ENCODE measurements at regions of chr19 and their contacts with region 1.

Region 1: GRCh38 chr19:17470068-17470841 is at the start of gene SLC27A1:
- DNase-seq: peak; percentile 100
- ATAC-seq: peak; percentile 96
- H3K4me3 ChIP-seq: peak within 1 kb of the TSS; percentile 56 to 62
- H3K27ac ChIP-seq: peak within 1 kb of the TSS in 1 of 2 donors; percentile 73
- H3K4me1 ChIP-seq: no peaks in the 10 kb centered on the region
- H3K27me3 ChIP-seq: no peaks in the 10 kb centered on the region
- total RNA-seq, gene SLC27A1: 12.0 to 22.2 TPM

Region 2: DNA sequence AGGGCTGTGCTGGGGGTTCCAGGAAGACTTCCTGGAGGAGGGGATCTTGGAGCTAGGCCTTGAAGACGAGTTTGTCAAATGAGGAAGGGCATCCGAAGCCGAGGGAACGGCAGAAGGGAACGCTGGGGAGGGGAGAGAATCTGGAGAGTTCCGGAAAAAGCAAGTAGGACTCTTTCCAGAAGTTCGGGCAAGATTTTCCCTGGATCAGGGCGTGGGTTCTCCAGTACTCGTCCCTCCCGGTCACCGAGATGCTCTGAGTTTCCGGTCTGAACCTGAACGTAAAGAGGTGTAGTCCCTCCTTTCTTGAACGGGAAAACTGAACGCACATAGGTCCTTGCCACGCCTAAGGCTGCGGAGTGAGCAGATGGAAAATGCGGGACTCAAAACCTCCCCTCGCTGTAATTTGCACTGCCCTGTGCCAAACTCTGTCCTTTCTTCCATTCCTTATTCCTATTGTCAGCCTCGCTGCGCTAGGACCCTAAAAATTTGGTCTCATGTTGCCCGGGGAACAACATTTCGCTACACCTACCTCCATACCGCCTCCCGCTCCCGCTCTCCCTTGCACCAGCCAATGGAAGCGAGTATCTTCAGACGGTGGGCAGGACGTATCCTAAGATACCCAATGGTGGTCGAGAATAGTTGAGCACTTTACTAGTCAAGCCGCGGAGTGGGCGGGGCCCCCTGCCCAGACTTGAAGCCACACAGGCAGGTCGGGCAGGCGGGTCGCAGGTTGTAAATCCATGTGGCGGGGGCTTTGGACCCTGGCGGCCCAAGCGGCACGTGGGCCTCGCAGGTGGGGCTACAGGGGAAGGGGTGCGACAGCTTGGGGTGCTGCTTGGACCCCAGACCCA is 133.2 kb before region 1 on chr19 and contains the start of gene GTPBP3:
- intact Hi-C with region 1: loop called in 1 of 2 experiments (anchors 5 kb)
- DNase-seq: peak; percentile 98
- ATAC-seq: peak; percentile 94
- H3K4me3 ChIP-seq: peak within 1 kb of the TSS; percentile 78 to 85
- H3K27ac ChIP-seq: peak within 1 kb of the TSS; percentile 90 to 95
- H3K4me1 ChIP-seq: no peaks in the 10 kb centered on the region
- H3K27me3 ChIP-seq: no peaks in the 10 kb centered on the region
- total RNA-seq, gene GTPBP3: 16.7 to 27.7 TPM

Region 3: DNA sequence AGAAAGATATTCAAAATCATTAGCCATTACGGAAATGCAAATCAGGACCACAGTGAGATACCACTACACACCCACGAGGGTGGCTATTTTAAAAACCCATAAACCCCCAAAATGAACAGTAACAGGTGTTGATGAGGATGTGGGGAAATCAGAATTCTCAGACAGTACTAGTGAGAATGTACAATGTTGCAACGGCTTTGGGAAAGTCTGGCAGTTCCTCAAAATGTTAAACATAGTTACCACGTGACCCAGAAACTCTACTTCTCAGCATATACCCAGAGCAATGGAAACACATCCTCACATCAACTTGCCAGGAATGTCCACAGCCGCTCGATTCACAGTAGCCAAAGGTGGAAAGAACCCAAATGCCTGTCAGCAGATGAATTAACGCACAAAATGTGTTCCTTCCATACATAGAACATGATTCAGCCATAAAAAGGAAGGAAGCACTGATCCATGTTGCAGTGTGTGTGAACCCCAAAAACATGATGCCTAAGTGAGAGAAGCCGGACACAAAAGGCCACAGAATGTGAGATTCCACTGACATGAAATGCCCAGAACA is 100.1 kb before region 1 on chr19:
- intact Hi-C with region 1: no loop called
- DNase-seq: no peak
- ATAC-seq: no peak
- H3K4me3 ChIP-seq: no peak overlapping the region
- H3K27ac ChIP-seq: no peak overlapping the region
- H3K4me1 ChIP-seq: no peaks in the 10 kb centered on the region
- H3K27me3 ChIP-seq: no peaks in the 10 kb centered on the region

Region 4: GRCh38 chr19:17390665-17391370 is 79.4 kb before region 1 on chr19:
- intact Hi-C with region 1: loop called in 1 of 2 experiments (anchors 5 kb)
- DNase-seq: peak; percentile 96 to 98
- ATAC-seq: peak; percentile 97
- H3K4me3 ChIP-seq: peak overlapping the region; percentile 27 to 58
- H3K27ac ChIP-seq: no peak overlapping the region
- H3K4me1 ChIP-seq: no peaks in the 10 kb centered on the region
- H3K27me3 ChIP-seq: no peaks in the 10 kb centered on the region

Region 5: GRCh38 chr19:17419154-17419620 is 51.1 kb before region 1 on chr19:
- intact Hi-C with region 1: no loop called
- DNase-seq: no peak
- ATAC-seq: no peak
- H3K4me3 ChIP-seq: no peak overlapping the region
- H3K27ac ChIP-seq: peak overlapping the region in 1 of 2 donors; percentile 41
- H3K4me1 ChIP-seq: no peaks in the 10 kb centered on the region
- H3K27me3 ChIP-seq: no peaks in the 10 kb centered on the region

Region 6: DNA sequence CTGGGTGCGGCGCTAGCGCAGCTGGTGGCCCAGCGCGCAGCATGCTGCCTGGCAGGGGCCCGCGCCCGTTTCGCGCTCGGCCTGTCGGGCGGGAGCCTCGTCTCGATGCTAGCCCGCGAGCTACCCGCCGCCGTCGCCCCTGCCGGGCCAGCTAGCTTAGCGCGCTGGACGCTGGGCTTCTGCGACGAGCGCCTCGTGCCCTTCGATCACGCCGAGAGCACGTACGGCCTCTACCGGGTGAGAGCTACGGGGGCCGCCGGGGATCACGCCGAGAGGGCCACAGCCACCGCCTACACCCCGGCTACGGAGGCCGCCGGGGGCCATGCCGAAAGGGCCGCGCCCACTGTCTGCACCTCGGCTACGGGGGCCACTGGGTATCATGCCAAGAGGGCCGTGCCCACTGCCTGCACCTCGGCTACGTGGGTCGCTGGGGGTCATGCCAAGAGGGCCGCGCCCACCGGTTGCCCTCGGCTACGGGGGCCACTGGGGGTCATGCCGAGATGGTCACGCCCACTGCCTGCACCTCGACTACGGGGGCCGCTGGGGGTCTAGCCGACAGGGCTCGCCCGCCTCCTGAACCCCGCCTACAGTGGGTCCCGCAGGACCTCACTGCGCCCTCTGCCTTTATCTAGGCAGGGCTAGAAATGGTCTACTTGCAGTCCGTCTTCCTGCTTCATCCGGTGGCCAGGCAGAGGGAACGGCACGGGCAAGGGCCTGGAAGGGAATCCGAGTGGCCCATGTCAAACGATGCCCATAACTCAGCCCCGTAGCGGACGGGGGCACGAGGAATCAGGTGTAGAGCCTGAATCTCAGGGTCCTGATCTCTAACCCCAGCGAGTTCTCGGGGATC is 41.7 kb after region 1 on chr19:
- intact Hi-C with region 1: loop called (anchors 5 kb)
- DNase-seq: peak; percentile 94
- ATAC-seq: peak; percentile 92
- H3K4me3 ChIP-seq: peak overlapping the region; percentile 57 to 61
- H3K27ac ChIP-seq: peak overlapping the region; percentile 47 to 70
- H3K4me1 ChIP-seq: no peaks in the 10 kb centered on the region
- H3K27me3 ChIP-seq: no peaks in the 10 kb centered on the region

Region 7: DNA sequence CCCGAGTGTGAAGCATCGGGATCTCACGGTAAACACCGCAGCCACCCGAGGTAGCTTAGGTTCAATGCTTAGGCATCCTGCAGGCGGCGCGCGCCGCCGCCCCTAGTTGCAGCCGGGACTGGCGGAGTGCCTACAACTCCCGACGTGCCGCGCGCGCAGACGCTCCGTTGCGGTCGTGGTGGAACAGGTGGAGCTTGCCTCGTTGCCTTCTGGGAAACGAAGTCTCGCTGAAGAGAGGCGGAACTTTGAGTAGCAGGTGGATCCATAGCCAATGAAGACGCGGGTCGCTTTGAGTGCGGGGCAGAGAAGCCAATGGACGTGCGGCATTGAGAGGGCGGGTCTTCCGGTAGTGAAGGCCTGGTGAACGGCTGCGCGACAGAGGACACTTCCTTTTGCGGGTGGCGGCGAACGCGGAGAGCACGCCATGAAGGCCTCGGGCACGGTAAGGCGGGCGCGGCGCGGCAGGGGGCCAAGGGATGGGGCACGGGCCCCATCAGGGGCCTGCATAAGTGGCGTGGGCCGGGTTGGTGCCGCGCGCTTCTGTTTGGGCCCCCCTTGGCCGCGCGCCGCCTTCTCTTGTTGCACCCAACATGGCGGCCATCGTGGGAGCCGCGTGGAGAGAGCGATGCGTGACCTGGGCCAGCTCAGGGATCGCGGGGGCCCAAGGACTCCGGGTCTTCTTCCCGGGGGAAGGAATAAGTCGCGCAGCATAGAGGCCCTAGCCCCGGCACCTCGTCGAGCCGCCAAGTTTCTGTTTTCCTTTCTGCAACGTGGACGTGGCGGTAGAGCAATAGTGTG is 389.5 kb after region 1 on chr19 and contains the start of gene RPL18A:
- intact Hi-C with region 1: loop called in 1 of 2 experiments (anchors 10 kb)
- DNase-seq: peak; percentile 99
- ATAC-seq: peak; percentile 98
- H3K4me3 ChIP-seq: peak within 1 kb of the TSS; percentile 31 to 83
- H3K27ac ChIP-seq: peak within 1 kb of the TSS in 1 of 2 donors; percentile 2
- H3K4me1 ChIP-seq: peaks cover 2 to 6% of the 10 kb centered on the region in 2 donors
- H3K27me3 ChIP-seq: no peaks in the 10 kb centered on the region
- total RNA-seq, gene RPL18A: 1,221 to 1,276 TPM